Mucosa of descending colon (tissue), 3 donors: ENCODE measurements at regions of chr12 and their contacts with region 1.

Region 1: DNA sequence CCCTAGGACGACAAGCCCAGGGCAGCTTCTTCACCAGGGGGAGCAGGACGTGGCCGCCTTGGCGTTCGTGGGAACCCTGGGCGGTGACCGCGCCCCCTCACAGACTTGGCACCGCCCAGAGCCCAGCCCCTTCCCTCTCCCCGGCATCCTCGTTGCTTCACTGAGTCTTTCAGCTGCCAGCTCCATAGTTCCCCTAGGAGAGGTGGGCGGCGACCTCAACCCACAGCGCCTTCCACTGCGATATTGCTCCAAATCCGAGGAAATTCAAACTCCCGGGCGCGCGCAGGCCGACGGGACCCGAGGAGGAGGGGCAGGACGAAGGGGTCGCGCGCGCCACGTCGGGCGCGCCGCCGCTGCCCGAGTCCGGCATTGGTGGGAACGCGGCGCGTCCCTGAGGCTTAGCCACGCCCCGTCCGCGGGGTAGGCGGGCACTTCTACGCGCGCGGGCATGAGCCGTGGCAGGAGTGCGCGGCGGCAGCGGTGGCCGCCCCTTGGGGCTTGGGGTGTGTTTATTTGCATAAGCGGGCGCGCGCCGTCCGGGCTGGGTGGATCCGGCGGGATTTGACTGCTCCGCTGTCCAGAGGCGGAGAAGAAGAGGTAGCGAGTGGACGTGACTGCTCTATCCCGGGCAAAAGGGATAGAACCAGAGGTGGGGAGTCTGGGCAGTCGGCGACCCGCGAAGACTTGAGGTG is at the starts of genes APAF1 and IKBIP:
- DNase-seq: peak; percentile 99
- ATAC-seq: peak; percentile 97
- H3K4me3 ChIP-seq: peak within 1 kb of the TSS; percentile 97
- H3K4me1 ChIP-seq: peaks cover 4% of the 10 kb centered on the region
- CTCF ChIP-seq: no peak
- total RNA-seq, gene APAF1: 22.5 to 44.2 (median 41.9) TPM
- total RNA-seq, gene IKBIP: 1.4 to 7.8 (median 7.5) TPM

Region 2: DNA sequence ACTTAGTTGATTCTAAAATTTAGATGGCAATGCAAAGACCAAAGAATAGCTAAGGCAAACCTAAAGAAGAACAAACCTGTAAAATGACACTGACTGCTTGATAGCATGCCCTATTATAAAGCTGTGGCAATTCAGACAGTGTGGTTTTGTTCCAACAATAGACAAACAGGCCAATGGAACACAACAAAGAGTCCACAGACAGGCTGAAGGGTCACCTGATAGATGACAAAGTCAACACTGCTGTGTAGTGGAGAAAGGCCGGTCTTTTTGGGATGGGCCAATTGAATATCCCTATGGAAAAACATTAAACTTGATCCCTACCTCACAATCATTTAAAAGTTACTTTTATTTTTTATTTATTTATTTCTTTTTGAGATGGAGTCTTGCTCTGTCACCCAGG is 85.2 kb before region 1 on chr12:
- intact Hi-C with region 1: loop called in 1 of 2 experiments (anchors 10 kb)
- DNase-seq: no peak
- ATAC-seq: no peak
- H3K4me3 ChIP-seq: no peak overlapping the region
- H3K4me1 ChIP-seq: no peaks in the 10 kb centered on the region
- CTCF ChIP-seq: no peak

Region 3: GRCh38 chr12:98593351-98594049 is 51.4 kb before region 1 on chr12 and contains the start of gene SLC25A3:
- intact Hi-C with region 1: loop called in 1 of 2 experiments (anchors 10 kb)
- DNase-seq: peak; percentile 96 to 98 (median 97)
- ATAC-seq: peak; percentile 98
- H3K4me3 ChIP-seq: peak within 1 kb of the TSS; percentile 95
- H3K4me1 ChIP-seq: peaks cover 5% of the 10 kb centered on the region
- CTCF ChIP-seq: no peak
- total RNA-seq, gene SLC25A3: 617 to 741 (median 658) TPM